CD4-positive, alpha-beta T cell (primary cell): ENCODE measurements at regions of chr4 and their contacts with region 1.

Region 1: DNA sequence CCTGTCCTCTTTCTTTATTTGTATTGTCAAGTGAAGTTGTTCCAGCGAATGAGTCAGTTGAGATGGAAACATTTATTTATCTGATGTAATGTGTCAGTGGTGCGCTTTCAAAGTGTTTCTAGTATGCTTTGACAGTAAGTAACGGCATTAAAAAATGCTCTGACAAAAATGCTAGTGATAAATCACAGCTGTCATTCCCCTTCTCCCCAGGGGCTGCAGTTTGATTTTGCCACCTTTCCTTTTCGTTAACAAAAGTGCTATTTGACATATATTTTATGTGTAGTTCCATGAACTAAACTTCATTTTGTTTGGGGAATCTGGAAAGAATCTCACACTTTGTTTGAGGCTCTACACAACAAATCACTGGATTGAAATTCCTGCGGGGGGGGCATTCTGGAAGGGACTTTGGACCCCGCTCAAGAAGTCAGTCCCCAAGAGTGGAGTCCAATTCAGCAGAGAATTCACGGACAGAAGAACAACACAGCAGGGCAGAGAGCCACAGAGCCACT is 7.6 kb upstream of the TBC1D19 start:
- DNase-seq: no peak
- ATAC-seq: no peak
- H3K4me3 ChIP-seq: no peak overlapping the region
- H3K4me3 Mint-ChIP-seq: no peak overlapping the region
- H3K27ac ChIP-seq: no peak overlapping the region
- H3K27ac Mint-ChIP-seq: no peak overlapping the region
- H3K4me1 ChIP-seq: no peaks in the 10 kb centered on the region
- H3K4me1 Mint-ChIP-seq: no peaks in the 10 kb centered on the region
- H3K27me3 ChIP-seq: peaks cover 0 to 7% of the 10 kb centered on the region in 2 experiments
- H3K27me3 Mint-ChIP-seq: peaks cover 11% of the 10 kb centered on the region
- CTCF ChIP-seq: no peak

Region 2: GRCh38 chr4:25779016-25779415 is 797.3 kb before region 1 on chr4:
- CTCF ChIA-PET with region 1: no interaction called
- POLR2A ChIA-PET with region 1: no interaction called
- intact Hi-C with region 1: loop called in 1 of 2 experiments (anchors 10 kb)
- DNase-seq: no peak
- ATAC-seq: no peak
- H3K4me3 ChIP-seq: no peak overlapping the region
- H3K4me3 Mint-ChIP-seq: no peak overlapping the region
- H3K27ac ChIP-seq: no peak overlapping the region
- H3K27ac Mint-ChIP-seq: no peak overlapping the region
- H3K4me1 ChIP-seq: no peaks in the 10 kb centered on the region
- H3K4me1 Mint-ChIP-seq: no peaks in the 10 kb centered on the region
- H3K27me3 ChIP-seq: no peaks in the 10 kb centered on the region
- H3K27me3 Mint-ChIP-seq: no peaks in the 10 kb centered on the region
- CTCF ChIP-seq: no peak

Region 3: GRCh38 chr4:26525136-26525770 is 51.0 kb before region 1 on chr4:
- CTCF ChIA-PET with region 1: no interaction called
- POLR2A ChIA-PET with region 1: no interaction called
- intact Hi-C with region 1: no loop called
- DNase-seq: no peak
- ATAC-seq: no peak
- H3K4me3 ChIP-seq: no peak overlapping the region
- H3K4me3 Mint-ChIP-seq: no peak overlapping the region
- H3K27ac ChIP-seq: no peak overlapping the region
- H3K27ac Mint-ChIP-seq: no peak overlapping the region
- H3K4me1 ChIP-seq: no peaks in the 10 kb centered on the region
- H3K4me1 Mint-ChIP-seq: no peaks in the 10 kb centered on the region
- H3K27me3 ChIP-seq: peaks cover 0 to 6% of the 10 kb centered on the region in 2 experiments
- H3K27me3 Mint-ChIP-seq: peaks cover 5% of the 10 kb centered on the region
- CTCF ChIP-seq: no peak

Region 4: GRCh38 chr4:27066601-27067000 is 490.3 kb after region 1 on chr4:
- CTCF ChIA-PET with region 1: no interaction called
- POLR2A ChIA-PET with region 1: no interaction called
- intact Hi-C with region 1: no loop called
- DNase-seq: peak in 2 of 14 experiments; percentile 38 to 47
- ATAC-seq: no peak
- H3K4me3 ChIP-seq: no peak overlapping the region
- H3K4me3 Mint-ChIP-seq: no peak overlapping the region
- H3K27ac ChIP-seq: no peak overlapping the region
- H3K27ac Mint-ChIP-seq: no peak overlapping the region
- H3K4me1 ChIP-seq: no peaks in the 10 kb centered on the region
- H3K4me1 Mint-ChIP-seq: no peaks in the 10 kb centered on the region
- H3K27me3 ChIP-seq: peaks cover 0 to 4% of the 10 kb centered on the region in 2 experiments
- H3K27me3 Mint-ChIP-seq: peaks cover 11% of the 10 kb centered on the region
- CTCF ChIP-seq: no peak